Mucosa of descending colon (tissue), 3 donors: ENCODE measurements at regions of chr17 and their contacts with region 1.

Region 1: GRCh38 chr17:15038656-15039055 is 226.5 kb downstream of the PMP22 start:
- DNase-seq: no peak
- ATAC-seq: no peak
- H3K4me3 ChIP-seq: no peak overlapping the region
- H3K4me1 ChIP-seq: no peaks in the 10 kb centered on the region
- CTCF ChIP-seq: no peak

Region 2: DNA sequence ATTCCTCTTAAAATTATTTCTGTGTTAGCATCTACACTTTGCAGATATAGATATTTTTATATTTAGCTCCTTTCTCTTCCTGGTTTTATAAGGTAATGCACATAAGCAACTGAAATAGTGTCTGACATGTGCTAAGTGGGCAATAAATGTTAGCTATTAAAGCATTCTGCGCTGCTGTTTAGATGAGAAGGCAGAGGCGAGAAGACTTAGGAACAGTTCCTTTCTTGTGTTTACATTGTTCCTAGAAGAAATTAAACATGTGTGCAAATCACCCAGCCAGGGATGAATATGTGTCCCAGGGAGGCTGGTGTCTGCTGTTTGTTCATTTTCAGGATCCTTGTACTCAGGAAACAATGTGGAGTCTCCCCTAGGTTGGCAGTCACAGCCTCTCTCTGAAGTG is 65.8 kb before region 1 on chr17:
- intact Hi-C with region 1: loop called in 1 of 2 experiments (anchors 10 kb)
- DNase-seq: no peak
- ATAC-seq: no peak
- H3K4me3 ChIP-seq: no peak overlapping the region
- H3K4me1 ChIP-seq: no peaks in the 10 kb centered on the region
- CTCF ChIP-seq: no peak